OCI-LY7 (cell line): ENCODE measurements at regions of chr15 and their contacts with region 1.

Region 1: GRCh38 chr15:41904541-41905005 is 10.7 kb upstream of the SPTBN5 start:
- DNase-seq: peak; percentile 69
- H3K4me3 ChIP-seq: no peak overlapping the region
- H3K27ac ChIP-seq: no peak overlapping the region
- H3K4me1 ChIP-seq: no peaks in the 10 kb centered on the region
- CTCF ChIP-seq: peak; percentile 90

Region 2: GRCh38 chr15:41557673-41558399 is 346.7 kb before region 1 on chr15:
- CTCF ChIA-PET with region 1: no interaction called
- POLR2A ChIA-PET with region 1: no interaction called
- intact Hi-C with region 1: loop called (anchors 5 kb)
- DNase-seq: peak; percentile 77
- H3K4me3 ChIP-seq: peak overlapping the region; percentile 50
- H3K27ac ChIP-seq: no peak overlapping the region
- H3K4me1 ChIP-seq: peaks cover 30% of the 10 kb centered on the region
- CTCF ChIP-seq: peak; percentile 99

Region 3: GRCh38 chr15:41827880-41828806 is 76.4 kb before region 1 on chr15 and contains the start of gene JMJD7:
- CTCF ChIA-PET with region 1: no interaction called
- POLR2A ChIA-PET with region 1: no interaction called
- intact Hi-C with region 1: loop called (anchors 5 kb)
- DNase-seq: peak; percentile 89
- H3K4me3 ChIP-seq: peak within 1 kb of the TSS; percentile 84
- H3K27ac ChIP-seq: no peak within 1 kb of the TSS
- H3K4me1 ChIP-seq: peaks cover 23% of the 10 kb centered on the region
- CTCF ChIP-seq: no peak
- total RNA-seq, gene JMJD7: 3.0 and 5.4 TPM in 2 replicates